ENCODE measurements at regions of chr2 and their contacts with region 1.

Region 1: GRCh38 chr2:24977631-24978030 is 5.9 kb upstream of the DNAJC27 start:
- DNase-seq: peak; percentile 35
- H3K4me3 ChIP-seq: no peak overlapping the region
- H3K27ac ChIP-seq: no peak overlapping the region
- H3K4me1 ChIP-seq: peaks cover 10% of the 10 kb centered on the region
- H3K27me3 ChIP-seq: no peaks in the 10 kb centered on the region
- CTCF ChIP-seq: no peak

Region 2: DNA sequence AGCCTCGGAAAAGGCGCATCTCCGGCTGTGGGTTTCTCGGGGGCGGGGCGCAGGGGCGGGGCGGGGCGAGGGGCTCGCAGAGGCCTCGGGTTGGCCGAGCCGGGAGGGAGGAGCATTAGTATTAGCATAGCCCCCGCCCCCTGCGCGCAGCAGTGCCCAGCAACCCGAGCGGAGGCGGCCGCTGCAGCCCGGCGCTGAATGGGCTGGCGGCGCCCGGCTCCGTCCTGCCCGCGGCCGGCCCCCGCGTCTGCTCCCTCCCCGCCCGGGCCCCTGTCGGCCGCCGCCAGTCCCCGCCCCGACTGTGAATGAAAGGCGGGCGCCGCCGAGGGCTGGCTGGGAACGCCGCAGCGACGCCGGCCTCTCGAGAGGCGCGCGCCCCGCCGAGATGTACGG is 64.3 kb after region 1 on chr2 and contains the start of gene EFR3B:
- CTCF ChIA-PET with region 1: no interaction called
- POLR2A ChIA-PET with region 1: no interaction called
- intact Hi-C with region 1: loop called (anchors 5 kb)
- DNase-seq: peak; percentile 96
- H3K4me3 ChIP-seq: peak within 1 kb of the TSS; percentile 61
- H3K27ac ChIP-seq: no peak within 1 kb of the TSS
- H3K4me1 ChIP-seq: peaks cover 18% of the 10 kb centered on the region
- H3K27me3 ChIP-seq: peaks cover 30% of the 10 kb centered on the region
- CTCF ChIP-seq: no peak
- total RNA-seq, gene EFR3B: 0.76 and 1.0 TPM in 2 replicates